CD8-positive, alpha-beta T cell (primary cell): ENCODE measurements at regions of chr2 and their contacts with region 1.

Region 1: DNA sequence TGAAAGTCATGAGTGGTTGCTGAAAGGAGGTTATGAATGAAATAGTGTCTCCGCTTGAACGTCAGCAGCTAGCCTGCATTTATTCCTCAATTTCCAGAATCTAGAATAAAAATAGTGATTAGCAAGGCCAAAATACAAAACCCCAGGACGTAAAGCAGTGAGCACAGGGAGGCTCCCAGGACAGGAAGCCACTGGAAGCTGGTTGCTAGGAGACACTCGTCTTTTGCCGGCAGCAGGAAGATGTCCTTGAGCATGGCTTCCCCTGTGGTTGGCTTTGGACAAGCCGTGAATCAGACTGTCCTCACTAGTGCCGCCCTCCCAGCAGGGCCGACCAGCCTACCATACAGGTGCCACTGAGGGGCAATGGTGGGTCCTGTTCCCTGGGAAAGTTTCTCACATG is 374.4 kb downstream of the MTX2 start:
- DNase-seq: no peak
- ATAC-seq: no peak
- H3K4me3 ChIP-seq: no peak overlapping the region
- H3K4me3 Mint-ChIP-seq: no peak overlapping the region
- H3K27ac ChIP-seq: no peak overlapping the region
- H3K27ac Mint-ChIP-seq: no peak overlapping the region
- H3K4me1 ChIP-seq: no peaks in the 10 kb centered on the region
- H3K4me1 Mint-ChIP-seq: no peaks in the 10 kb centered on the region
- H3K27me3 ChIP-seq: peaks cover 3 to 11% of the 10 kb centered on the region in 2 experiments
- H3K27me3 Mint-ChIP-seq: peaks cover 72% of the 10 kb centered on the region
- CTCF ChIP-seq: no peak

Region 2: GRCh38 chr2:175251425-175252041 is 1392.1 kb before region 1 on chr2:
- CTCF ChIA-PET with region 1: no interaction called
- POLR2A ChIA-PET with region 1: no interaction called
- intact Hi-C with region 1: loop called (anchors 10 kb)
- DNase-seq: peak in 3 of 9 experiments; percentile 5 to 43 (median 24)
- ATAC-seq: no peak
- H3K4me3 ChIP-seq: no peak overlapping the region
- H3K4me3 Mint-ChIP-seq: no peak overlapping the region
- H3K27ac ChIP-seq: no peak overlapping the region
- H3K27ac Mint-ChIP-seq: no peak overlapping the region
- H3K4me1 ChIP-seq: no peaks in the 10 kb centered on the region
- H3K4me1 Mint-ChIP-seq: peaks cover 4% of the 10 kb centered on the region
- H3K27me3 ChIP-seq: peaks cover 0 to 2% of the 10 kb centered on the region in 2 experiments
- H3K27me3 Mint-ChIP-seq: peaks cover 25% of the 10 kb centered on the region
- CTCF ChIP-seq: peak; percentile 49

Region 3: GRCh38 chr2:175684457-175684856 is 959.2 kb before region 1 on chr2:
- CTCF ChIA-PET with region 1: no interaction called
- POLR2A ChIA-PET with region 1: no interaction called
- intact Hi-C with region 1: loop called in 1 of 2 experiments (anchors 10 kb)
- DNase-seq: no peak
- ATAC-seq: no peak
- H3K4me3 ChIP-seq: no peak overlapping the region
- H3K4me3 Mint-ChIP-seq: no peak overlapping the region
- H3K27ac ChIP-seq: no peak overlapping the region
- H3K27ac Mint-ChIP-seq: no peak overlapping the region
- H3K4me1 ChIP-seq: no peaks in the 10 kb centered on the region
- H3K4me1 Mint-ChIP-seq: no peaks in the 10 kb centered on the region
- H3K27me3 ChIP-seq: peaks cover 0 to 3% of the 10 kb centered on the region in 2 experiments
- H3K27me3 Mint-ChIP-seq: peaks cover 30% of the 10 kb centered on the region
- CTCF ChIP-seq: no peak